Right cardiac atrium (tissue), 5 donors: ENCODE measurements at regions of chr6 and their contacts with region 1.

Region 1: DNA sequence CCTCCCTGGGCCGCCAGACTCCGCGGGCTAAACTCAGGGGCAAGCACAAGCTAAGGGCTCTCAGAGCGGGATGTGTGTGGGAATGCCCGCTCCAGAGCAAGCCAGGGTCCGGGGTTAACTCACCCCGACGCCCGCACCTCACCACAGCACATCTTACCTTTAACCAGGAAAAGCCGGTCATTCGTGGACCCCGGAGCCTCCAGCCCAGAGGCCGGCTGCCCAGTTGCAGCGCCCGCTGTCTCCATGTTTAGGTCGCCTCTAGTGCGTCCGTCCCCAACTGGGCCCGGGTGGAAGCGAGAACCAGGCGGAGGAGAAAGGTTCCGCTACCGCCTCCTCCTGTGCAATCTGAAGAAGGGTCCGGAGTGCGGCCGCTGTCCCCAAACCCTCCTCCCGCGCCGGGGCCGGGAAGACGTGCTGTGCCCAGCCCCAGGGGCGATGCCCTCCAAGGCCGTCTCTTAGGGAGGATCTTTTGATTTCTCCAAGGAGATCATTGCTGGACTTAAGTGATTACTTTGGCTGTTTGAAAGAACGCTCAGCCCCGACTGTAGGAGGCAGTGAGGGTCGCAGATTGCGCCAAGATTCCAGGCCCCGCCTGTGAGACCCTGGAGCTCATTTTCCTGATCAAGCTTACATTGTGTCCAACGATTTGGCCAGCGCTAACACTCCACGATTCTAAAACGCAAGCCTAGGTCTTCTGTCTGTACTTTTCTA is at the start of gene TMEM242:
- DNase-seq: peak; percentile 91 to 96 (median 96)
- ATAC-seq: peak; percentile 95 to 96
- H3K4me3 ChIP-seq: peak within 1 kb of the TSS; percentile 61
- H3K27ac ChIP-seq: peak within 1 kb of the TSS; percentile 96
- H3K4me1 ChIP-seq: peaks cover 4% of the 10 kb centered on the region
- H3K27me3 ChIP-seq: no peaks in the 10 kb centered on the region
- total RNA-seq, gene TMEM242: 11.5 to 14.8 (median 13.8) TPM

Region 2: GRCh38 chr6:157434349-157435033 is 111.1 kb after region 1 on chr6:
- intact Hi-C with region 1: loop called in 1 of 4 experiments (anchors 5 kb)
- DNase-seq: peak; percentile 70 to 85 (median 77)
- ATAC-seq: peak; percentile 72 to 73
- H3K4me3 ChIP-seq: no peak overlapping the region
- H3K27ac ChIP-seq: peak overlapping the region; percentile 96
- H3K4me1 ChIP-seq: peaks cover 25% of the 10 kb centered on the region
- H3K27me3 ChIP-seq: no peaks in the 10 kb centered on the region

Region 3: GRCh38 chr6:157563611-157564284 is 240.3 kb after region 1 on chr6:
- intact Hi-C with region 1: no loop called
- DNase-seq: no peak
- ATAC-seq: no peak
- H3K4me3 ChIP-seq: no peak overlapping the region
- H3K27ac ChIP-seq: no peak overlapping the region
- H3K4me1 ChIP-seq: no peaks in the 10 kb centered on the region
- H3K27me3 ChIP-seq: no peaks in the 10 kb centered on the region